Activated B cell treated with CpG ODN at 0.5 μM for 24 hours (primary cell): ENCODE measurements at regions of chr2 and their contacts with region 1.

Region 1: GRCh38 chr2:26764078-26764887 is at the start of gene SLC35F6:
- DNase-seq: peak; percentile 88
- ATAC-seq: peak; percentile 96
- H3K4me3 Mint-ChIP-seq: peak within 1 kb of the TSS; percentile 93
- H3K27ac Mint-ChIP-seq: peak within 1 kb of the TSS; percentile 88
- H3K4me1 Mint-ChIP-seq: peaks cover 23% of the 10 kb centered on the region
- H3K27me3 Mint-ChIP-seq: no peaks in the 10 kb centered on the region
- CTCF ChIP-seq: no peak
- total RNA-seq, gene SLC35F6: 11.4 and 14.2 TPM in 2 replicates

Region 2: DNA sequence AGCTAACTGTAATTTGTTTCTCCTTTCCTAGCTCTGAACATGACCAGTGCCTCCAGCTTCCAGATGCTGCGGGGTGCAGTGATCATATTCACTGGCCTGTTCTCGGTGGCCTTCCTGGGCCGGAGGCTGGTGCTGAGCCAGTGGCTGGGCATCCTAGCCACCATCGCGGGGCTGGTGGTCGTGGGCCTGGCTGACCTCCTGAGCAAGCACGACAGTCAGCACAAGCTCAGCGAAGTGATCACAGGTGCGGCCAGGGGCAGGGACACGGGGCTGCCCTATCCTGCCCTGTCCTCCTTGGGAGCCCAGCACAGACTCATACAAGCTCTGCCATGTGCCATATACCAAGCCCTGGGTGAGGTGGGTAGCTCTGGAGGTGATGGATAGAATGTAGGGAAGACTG is 11.2 kb after region 1 on chr2:
- CTCF ChIA-PET with region 1: no interaction called
- POLR2A ChIA-PET with region 1: no interaction called
- intact Hi-C with region 1: no loop called
- DNase-seq: no peak
- ATAC-seq: no peak
- H3K4me3 Mint-ChIP-seq: no peak overlapping the region
- H3K27ac Mint-ChIP-seq: no peak overlapping the region
- H3K4me1 Mint-ChIP-seq: peaks cover 8% of the 10 kb centered on the region
- H3K27me3 Mint-ChIP-seq: no peaks in the 10 kb centered on the region
- CTCF ChIP-seq: no peak

Region 3: GRCh38 chr2:26785431-26786206 is 21.3 kb after region 1 on chr2 and contains the start of gene CENPA:
- CTCF ChIA-PET with region 1: no interaction called
- POLR2A ChIA-PET with region 1: interaction called, 4 read pairs
- intact Hi-C with region 1: loop called (anchors 1 kb)
- DNase-seq: peak; percentile 87
- ATAC-seq: peak; percentile 99
- H3K4me3 Mint-ChIP-seq: peak within 1 kb of the TSS; percentile 84
- H3K27ac Mint-ChIP-seq: peak within 1 kb of the TSS; percentile 65
- H3K4me1 Mint-ChIP-seq: peaks cover 15% of the 10 kb centered on the region
- H3K27me3 Mint-ChIP-seq: peaks cover 3% of the 10 kb centered on the region
- CTCF ChIP-seq: no peak
- total RNA-seq, gene CENPA: 0.42 TPM in 2 replicates